Mammary epithelial cell (primary cell): ENCODE measurements at regions of chr11 and their contacts with region 1.

Region 1: DNA sequence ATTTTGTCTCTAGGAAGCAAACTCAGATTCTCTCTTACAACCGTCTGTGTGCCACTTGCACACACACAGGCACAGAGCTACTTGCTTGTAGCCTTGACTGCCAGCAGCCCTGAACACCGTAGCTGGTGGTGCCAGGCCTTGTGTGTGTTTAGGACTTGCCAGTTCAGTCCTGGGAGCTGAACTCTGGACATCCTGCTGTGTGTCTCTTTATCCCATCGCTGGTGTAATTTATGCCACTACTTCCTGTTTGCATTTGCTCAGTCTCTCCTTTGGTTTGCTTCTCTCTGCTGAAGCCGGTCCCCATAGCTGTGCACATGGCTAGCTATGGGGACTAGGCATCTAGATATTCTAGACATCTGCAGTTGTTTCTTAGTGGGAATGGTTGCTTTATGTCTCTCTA is 24.0 kb downstream of the MARK2 start:
- DNase-seq: no peak
- H3K4me3 ChIP-seq: no peak overlapping the region
- H3K27ac ChIP-seq: no peak overlapping the region
- H3K4me1 ChIP-seq: peaks cover 4% of the 10 kb centered on the region
- H3K27me3 ChIP-seq: no peaks in the 10 kb centered on the region
- CTCF ChIP-seq: no peak

Region 2: DNA sequence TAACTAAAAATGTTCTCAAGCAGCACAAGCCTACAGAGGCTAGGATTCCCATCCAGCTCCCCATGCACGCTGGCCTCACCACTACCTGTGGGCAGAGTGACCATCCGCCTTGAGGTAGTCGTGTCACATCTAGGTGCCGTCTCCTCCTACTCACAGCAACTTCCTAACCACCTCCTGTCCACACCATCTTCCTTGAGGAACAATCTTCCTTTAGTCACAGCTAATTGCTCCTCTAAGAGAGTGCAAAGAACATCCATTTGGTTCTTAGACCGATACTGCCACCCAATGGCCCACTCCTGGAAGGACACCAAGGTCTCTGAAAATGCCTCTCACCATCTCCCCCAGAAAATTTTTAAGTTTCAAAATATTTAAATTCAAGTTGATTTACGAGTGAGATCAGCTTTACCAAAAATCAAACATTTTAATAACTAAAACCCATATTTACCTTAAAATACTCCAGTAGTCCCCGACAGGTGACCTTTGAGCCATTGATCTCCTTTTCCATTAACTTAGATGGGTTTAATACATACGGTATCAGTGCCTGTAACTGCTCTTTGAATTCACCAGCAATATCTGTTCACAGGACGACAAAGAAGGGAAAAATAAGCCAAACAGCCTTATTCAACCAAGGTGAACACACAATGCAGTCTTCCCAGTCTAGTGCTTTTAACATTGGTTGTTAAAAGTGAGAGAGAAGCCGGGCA is 227.0 kb before region 1 on chr11:
- CTCF ChIA-PET with region 1: no interaction called
- dilution Hi-C with region 1: no loop called
- in situ Hi-C with region 1: no loop called
- intact Hi-C with region 1: no loop called
- DNase-seq: peak; percentile 37
- H3K4me3 ChIP-seq: no peak overlapping the region
- H3K27ac ChIP-seq: no peak overlapping the region
- H3K4me1 ChIP-seq: no peaks in the 10 kb centered on the region
- H3K27me3 ChIP-seq: no peaks in the 10 kb centered on the region
- CTCF ChIP-seq: peak; percentile 62 to 79

Region 3: GRCh38 chr11:63698976-63699733 is 163.8 kb before region 1 on chr11:
- CTCF ChIA-PET with region 1: no interaction called
- dilution Hi-C with region 1: no loop called
- in situ Hi-C with region 1: no loop called
- intact Hi-C with region 1: no loop called
- DNase-seq: no peak
- H3K4me3 ChIP-seq: no peak overlapping the region
- H3K27ac ChIP-seq: no peak overlapping the region
- H3K4me1 ChIP-seq: no peaks in the 10 kb centered on the region
- H3K27me3 ChIP-seq: no peaks in the 10 kb centered on the region
- CTCF ChIP-seq: no peak

Region 4: GRCh38 chr11:63783925-63784592 is 78.9 kb before region 1 on chr11:
- CTCF ChIA-PET with region 1: no interaction called
- dilution Hi-C with region 1: loop called (anchors 5 kb)
- in situ Hi-C with region 1: no loop called
- intact Hi-C with region 1: no loop called
- DNase-seq: no peak
- H3K4me3 ChIP-seq: no peak overlapping the region
- H3K27ac ChIP-seq: no peak overlapping the region
- H3K4me1 ChIP-seq: no peaks in the 10 kb centered on the region
- H3K27me3 ChIP-seq: no peaks in the 10 kb centered on the region
- CTCF ChIP-seq: no peak

Region 5: DNA sequence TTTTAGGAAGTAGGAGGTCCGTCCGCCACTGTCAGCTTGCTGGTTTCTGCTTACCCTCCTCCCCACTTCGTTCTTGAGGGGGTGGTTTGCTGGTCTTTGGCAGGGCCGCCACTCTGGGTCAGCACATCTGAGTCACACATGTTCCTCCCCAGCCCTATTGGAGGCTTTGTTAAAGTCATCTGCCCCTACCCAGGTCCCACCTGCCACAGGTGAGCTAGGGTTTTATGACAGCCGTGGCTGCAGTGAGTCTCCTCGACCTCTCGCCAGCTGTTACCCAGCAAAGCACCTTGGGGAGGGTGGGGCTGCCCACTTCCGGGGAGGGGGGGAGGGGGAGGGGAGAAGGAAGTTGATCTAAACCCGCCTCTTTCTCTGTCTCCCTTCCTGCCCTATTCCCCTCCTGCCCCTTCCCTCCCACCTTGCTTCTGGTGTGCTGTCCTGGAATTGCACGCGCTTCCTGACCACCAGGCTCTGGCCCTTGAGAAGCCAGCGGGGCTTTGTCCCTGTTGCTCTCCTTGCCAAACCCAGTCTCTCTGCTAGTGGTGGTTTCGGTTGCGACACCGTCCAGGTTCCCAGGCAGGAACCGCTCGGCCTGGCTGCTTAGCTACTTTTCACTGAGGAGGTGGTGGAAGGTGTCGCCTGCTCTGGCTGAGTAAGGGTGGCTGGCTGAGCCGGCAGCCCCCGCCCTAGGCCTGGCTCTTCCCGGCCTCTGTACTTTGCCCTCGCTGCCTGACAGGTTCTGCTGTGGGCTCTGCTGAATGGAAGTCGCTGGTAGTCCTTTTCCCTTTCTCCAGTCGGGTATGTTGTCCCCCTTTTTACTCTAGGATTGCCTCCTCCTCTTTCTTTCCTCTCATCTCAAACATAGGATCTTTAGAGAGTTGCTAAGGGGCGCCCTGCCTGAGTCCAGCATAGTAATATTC is 25.5 kb after region 1 on chr11:
- CTCF ChIA-PET with region 1: no interaction called
- dilution Hi-C with region 1: no loop called
- in situ Hi-C with region 1: no loop called
- intact Hi-C with region 1: no loop called
- DNase-seq: peak; percentile 87
- H3K4me3 ChIP-seq: peak overlapping the region; percentile 47 to 53 (median 53)
- H3K27ac ChIP-seq: peak overlapping the region; percentile 85
- H3K4me1 ChIP-seq: peaks cover 34% of the 10 kb centered on the region
- H3K27me3 ChIP-seq: no peaks in the 10 kb centered on the region
- CTCF ChIP-seq: no peak

Region 6: DNA sequence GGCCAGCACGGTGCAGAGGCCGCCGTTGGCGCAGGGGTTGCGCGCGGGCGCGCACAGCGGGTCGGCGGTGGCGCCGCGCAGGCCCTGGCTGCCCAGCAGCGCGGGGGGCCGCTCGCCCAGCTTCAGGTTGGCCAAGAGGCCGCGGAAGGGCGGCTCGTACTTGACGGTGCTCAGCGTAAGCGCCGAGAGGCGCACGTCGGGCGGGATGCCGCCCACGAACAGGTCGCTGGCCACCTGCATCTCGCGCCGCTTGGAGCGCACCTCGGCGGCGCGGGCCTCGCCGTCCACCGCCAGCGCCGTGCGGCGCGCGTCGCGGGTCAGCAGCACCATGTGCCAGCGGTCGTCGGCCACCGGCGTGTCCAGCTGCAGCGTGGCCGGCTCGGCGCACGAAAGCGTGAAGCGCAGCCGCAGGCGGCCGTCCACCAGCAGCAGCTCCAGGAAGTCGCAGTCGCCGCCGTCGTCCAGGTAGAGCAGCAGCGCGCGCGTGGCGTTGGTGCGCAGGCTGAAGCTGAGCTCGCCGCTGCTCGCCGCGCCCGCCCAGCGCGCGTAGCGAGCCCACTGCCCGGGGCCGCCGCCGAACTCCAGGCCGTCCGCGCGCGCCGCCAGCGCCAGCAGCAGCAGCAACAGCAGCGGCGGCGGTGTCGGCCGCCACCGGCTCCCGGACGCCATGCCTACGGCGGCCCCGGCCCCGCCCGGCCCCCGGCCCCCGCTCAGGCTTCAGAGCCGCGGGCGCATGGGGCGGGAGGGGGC is 850.3 kb after region 1 on chr11:
- CTCF ChIA-PET with region 1: no interaction called
- dilution Hi-C with region 1: no loop called
- in situ Hi-C with region 1: no loop called
- intact Hi-C with region 1: no loop called
- DNase-seq: peak; percentile 39
- H3K4me3 ChIP-seq: no peak overlapping the region
- H3K27ac ChIP-seq: no peak overlapping the region
- H3K4me1 ChIP-seq: no peaks in the 10 kb centered on the region
- H3K27me3 ChIP-seq: peaks cover 21% of the 10 kb centered on the region
- CTCF ChIP-seq: no peak